Sigmoid colon (tissue), 7 donors: ENCODE measurements at regions of chr5 and their contacts with region 1.

Region 1: DNA sequence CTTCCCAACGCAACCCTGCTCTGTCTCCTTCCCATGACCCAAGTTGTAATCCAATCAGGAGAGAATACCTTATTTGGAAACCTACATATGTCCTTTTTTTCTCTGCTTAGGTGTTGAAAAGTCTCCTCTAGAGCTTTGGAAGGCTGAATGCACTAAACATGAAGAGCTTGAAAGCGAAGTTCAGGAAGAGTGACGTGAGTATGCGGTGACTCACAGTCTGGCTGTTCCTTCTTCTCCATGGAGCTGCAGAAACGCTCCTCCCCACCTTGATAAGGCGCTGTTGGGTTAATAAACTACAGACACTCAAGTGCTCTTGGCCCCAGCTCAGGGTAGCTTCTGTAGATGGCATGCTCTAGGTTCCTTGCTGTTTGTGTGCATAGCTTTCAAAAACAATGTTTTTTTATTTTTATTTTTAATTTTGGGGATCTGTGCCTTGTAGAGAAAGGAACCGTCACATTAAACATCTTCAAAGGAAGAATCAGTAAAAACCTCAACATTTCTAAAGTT is 30.7 kb downstream of the RAI14 start:
- DNase-seq: peak; percentile 89
- H3K4me3 ChIP-seq: no peak overlapping the region
- H3K27ac ChIP-seq: peak overlapping the region in 3 of 4 donors; percentile 73 to 81 (median 74)
- H3K4me1 ChIP-seq: peaks cover 0 to 71% (median 45%) of the 10 kb centered on the region in 4 donors
- H3K27me3 ChIP-seq: no peaks in the 10 kb centered on the region
- CTCF ChIP-seq: no peak
- EP300 ChIP-seq: peak in 1 of 4 donors; percentile 13
- POLR2A ChIP-seq: peak in 1 of 2 donors; percentile 24

Region 2: DNA sequence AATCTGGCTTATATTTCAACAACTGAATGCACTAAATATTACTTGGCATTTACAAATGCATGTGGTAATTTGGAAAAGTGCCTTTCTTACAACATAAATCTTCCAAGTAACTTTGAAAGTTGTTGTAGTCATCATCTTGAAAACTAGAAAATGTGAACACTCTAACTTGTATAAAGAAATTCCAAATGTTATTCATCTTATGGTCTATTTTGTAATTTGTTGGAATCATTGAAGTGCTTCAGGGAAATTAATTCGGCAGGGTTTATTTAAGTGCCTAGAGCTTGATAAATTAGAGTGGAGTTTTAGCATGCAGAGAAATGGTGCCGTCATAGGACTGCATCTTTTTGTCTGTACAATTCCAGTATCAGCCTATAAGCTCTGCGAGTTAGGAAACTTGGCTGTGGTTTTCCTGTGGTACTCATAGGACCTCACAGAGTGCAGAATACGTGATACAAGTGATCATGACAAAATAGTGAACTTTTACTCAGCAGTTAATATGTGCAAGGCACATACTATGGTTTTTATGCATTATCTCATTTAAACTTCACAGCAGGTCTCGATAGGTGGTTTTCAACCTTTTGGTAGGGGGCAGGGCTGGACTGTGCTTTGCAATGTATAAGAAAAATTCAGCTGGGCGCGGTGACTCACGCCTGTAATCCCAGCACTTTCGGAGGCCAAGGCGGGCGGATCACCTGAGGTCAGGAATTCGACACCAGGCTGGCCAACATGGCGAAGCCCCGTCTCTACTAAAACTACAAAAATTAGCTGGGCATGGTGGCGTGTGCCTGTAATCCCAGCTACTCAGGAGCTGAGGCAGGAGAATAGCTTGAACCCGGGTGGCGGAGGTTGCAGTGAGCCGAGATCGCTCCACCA is 48.9 kb after region 1 on chr5:
- intact Hi-C with region 1: loop called (anchors 5 kb)
- DNase-seq: no peak
- H3K4me3 ChIP-seq: no peak overlapping the region
- H3K27ac ChIP-seq: peak overlapping the region in 1 of 4 donors; percentile 23
- H3K4me1 ChIP-seq: peaks cover 0 to 63% (median 40%) of the 10 kb centered on the region in 4 donors
- H3K27me3 ChIP-seq: no peaks in the 10 kb centered on the region
- CTCF ChIP-seq: no peak
- EP300 ChIP-seq: peak in 1 of 4 donors; percentile 15
- POLR2A ChIP-seq: no peak